Right ventricle myocardium inferior (tissue), 1 donor: ENCODE measurements at regions of chr11 and their contacts with region 1.

Region 1: DNA sequence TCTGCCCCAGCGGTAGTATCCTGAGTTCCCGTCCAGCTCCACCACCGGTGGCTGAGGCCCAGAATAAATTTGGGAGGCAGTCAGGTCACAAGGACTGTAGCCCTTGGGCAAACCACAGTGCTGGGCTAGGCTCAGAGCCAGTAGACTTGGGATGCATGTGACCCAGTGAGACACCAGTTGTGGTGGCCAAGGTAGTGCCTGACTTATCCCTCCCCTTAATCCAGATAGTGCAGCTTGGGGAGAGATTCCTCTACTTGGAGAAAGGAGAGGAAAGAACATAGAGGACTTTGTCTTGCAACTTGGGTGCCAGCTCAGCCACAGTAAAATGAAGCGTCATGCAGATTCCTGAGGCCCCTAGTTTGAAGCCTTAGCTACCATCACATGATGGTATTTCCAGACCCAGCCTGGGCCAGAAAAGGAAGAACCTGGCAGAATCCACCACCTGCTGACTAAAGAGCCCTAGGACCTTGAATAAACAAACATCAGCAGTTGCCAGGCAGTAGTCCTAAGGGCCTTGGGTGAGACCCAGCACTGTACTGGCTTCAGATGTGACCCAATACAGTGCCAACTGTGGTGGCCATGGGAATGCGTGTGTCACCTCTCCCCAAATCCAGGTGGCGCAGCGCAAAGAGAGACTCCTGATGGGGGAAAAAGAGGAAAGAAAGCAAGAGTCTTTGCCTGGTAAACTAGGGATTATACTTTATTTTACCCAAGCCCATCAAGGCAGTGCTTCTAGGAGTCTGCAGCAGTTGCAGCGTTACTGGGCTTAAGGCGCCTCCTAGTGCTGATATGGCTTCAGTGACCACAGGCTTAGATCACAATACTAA is 17.0 kb upstream of the DDX10 start:
- DNase-seq: peak; percentile 80
- ATAC-seq: peak; percentile 94

Region 2: GRCh38 chr11:108121274-108122155 is 526.4 kb before region 1 on chr11 and contains the start of gene ACAT1:
- intact Hi-C with region 1: loop called (anchors 5 kb)
- DNase-seq: peak; percentile 100
- ATAC-seq: peak; percentile 95
- total RNA-seq, gene ACAT1: 396 TPM

Region 3: GRCh38 chr11:108414958-108415357 is 233.0 kb before region 1 on chr11:
- intact Hi-C with region 1: loop called (anchors 2 kb)
- DNase-seq: no peak
- ATAC-seq: no peak

Region 4: DNA sequence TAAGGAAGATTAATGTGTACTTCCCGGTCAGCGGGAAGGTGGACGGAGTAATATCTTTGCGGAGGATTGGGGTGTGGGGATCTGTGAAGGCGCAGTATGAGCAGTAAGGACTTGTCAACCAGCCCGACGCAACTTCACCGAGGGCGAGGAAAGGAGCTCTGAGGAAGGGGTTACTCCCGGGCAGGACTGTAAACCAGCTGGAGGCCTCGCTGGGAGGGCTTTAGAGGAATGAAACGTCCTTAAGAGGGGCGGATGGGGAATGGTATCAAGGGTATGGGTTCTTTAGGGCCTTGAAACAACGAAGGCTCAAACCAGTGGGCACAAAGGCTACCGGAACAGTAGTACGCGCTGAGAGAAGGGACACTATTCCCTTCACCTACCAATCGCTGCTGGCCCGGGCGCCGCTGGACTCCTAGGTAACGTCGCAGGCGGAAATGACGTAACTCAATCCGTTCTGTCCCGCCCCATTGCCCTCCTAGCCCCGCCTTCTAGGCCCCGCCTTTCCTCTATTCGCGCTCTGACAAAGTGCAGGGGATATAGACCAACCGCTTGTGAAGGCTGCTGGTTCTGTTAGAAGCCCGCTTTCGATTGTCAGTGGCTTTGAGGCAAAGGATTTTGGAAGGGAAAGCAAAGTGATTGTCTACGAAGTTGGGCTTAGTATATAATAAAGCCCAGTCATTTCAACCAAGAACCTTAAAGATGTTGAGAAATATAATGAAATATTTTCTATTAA is 180.7 kb before region 1 on chr11 and contains the start of gene C11orf65:
- intact Hi-C with region 1: loop called (anchors 2 kb)
- DNase-seq: peak; percentile 98
- ATAC-seq: peak; percentile 100
- total RNA-seq, gene C11orf65: 0.43 TPM

Region 5: GRCh38 chr11:108497317-108498045 is 150.4 kb before region 1 on chr11:
- intact Hi-C with region 1: loop called (anchors 10 kb)
- DNase-seq: peak; percentile 89
- ATAC-seq: peak; percentile 95

Region 6: DNA sequence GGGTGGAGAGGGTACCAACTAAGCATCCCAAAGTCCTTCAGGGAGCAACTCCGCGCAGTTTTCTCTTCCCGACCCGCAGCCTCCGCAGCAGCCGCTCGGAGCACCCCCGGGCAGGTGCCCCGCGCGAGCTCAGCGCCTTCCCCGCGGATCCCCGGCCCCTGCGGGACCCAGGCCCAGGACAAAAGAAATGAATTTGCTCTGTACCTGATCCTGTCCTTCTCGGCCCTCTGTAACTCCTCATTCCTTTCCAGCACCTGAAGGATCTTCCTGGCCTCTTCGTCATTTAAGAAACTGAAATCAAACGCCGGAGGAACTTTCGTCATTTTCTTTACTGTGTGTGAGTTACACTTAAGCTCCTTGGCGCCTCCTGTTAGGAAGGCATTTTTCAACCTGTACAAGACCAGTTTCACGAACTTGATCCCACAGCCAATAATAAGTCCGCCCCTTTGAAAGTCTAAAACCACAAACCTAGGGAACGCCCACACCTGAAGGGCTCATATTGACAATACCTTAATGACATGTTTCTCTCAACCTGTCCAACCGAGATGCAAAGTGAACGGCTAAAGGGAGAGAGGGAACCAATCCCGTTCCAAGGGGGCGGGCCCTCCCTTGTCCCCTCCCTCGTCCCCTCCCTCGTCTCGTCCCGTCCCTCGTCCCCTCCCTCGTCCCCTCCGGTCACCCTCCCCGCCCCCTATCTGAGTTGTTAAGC is 54.5 kb before region 1 on chr11 and contains the start of gene EXPH5:
- intact Hi-C with region 1: loop called (anchors 5 kb)
- DNase-seq: peak; percentile 86
- ATAC-seq: peak; percentile 99
- total RNA-seq, gene EXPH5: 2.2 TPM

Region 7: GRCh38 chr11:108853864-108854263 is 205.9 kb after region 1 on chr11:
- intact Hi-C with region 1: no loop called
- DNase-seq: no peak
- ATAC-seq: peak; percentile 47